Common myeloid progenitor, CD34-positive (primary cell): ENCODE measurements at regions of chr11 and their contacts with region 1.

Region 1: GRCh38 chr11:128417607-128418324 is 169.6 kb downstream of the ETS1 start:
- DNase-seq: no peak
- H3K4me3 ChIP-seq: no peak overlapping the region
- H3K27ac ChIP-seq: no peak overlapping the region
- H3K4me1 ChIP-seq: peaks cover 0 to 8% (median 4%) of the 10 kb centered on the region in 4 experiments
- H3K27me3 ChIP-seq: no peaks in the 10 kb centered on the region

Region 2: GRCh38 chr11:128195057-128195751 is 222.6 kb before region 1 on chr11:
- CTCF ChIA-PET with region 1: no interaction called
- POLR2A ChIA-PET with region 1: no interaction called
- DNase-seq: peak; percentile 95 to 99 (median 99)
- H3K4me3 ChIP-seq: peak overlapping the region in 3 of 7 experiments; percentile 9 to 32 (median 31)
- H3K27ac ChIP-seq: peak overlapping the region; percentile 43 to 68
- H3K4me1 ChIP-seq: peaks cover 28 to 54% (median 37%) of the 10 kb centered on the region in 4 experiments
- H3K27me3 ChIP-seq: no peaks in the 10 kb centered on the region

Region 3: DNA sequence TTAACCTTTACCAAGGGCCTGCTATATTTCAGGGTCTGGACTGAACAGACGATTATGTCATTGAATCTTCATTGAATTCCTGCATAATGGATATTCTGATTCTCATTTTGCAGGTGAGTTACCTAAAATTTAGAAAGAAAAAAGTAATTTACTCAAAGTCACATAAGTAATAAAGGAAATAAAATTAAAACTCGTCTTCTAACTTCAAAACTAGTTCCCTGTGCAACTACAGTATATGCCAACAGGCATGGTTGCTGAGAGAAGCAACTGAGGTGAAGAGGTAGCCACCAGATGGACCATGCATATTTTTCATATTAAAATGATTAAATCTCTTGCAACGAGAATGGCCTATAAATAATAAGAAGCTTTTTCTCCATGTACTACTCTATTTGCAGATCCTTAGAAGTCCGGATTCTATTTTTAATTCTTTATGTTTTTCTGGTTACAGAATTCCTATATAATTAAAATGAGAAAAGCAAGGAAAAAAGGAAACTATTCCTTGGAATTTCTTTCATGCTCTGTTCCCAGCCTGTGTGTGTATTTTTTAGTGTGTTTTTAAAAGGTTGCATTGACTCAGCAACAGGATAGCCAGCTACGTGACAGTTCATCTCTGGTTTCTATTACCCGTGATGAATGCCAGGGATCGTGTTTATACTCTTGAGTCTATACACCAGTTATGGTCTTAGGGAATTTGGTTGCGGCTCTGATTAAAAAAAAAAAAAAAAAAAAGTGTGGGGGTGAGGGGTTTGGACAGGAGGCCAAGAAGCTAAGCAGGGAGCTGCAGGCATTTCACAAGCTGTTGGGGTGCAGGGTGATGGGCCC is 17.2 kb before region 1 on chr11:
- CTCF ChIA-PET with region 1: interaction called, 11 read pairs
- POLR2A ChIA-PET with region 1: no interaction called
- DNase-seq: no peak
- H3K4me3 ChIP-seq: no peak overlapping the region
- H3K27ac ChIP-seq: no peak overlapping the region
- H3K4me1 ChIP-seq: peaks cover 0 to 9% (median 5%) of the 10 kb centered on the region in 4 experiments
- H3K27me3 ChIP-seq: no peaks in the 10 kb centered on the region